ENCODE measurements at regions of chr12 and their contacts with region 1.

Region 1: DNA sequence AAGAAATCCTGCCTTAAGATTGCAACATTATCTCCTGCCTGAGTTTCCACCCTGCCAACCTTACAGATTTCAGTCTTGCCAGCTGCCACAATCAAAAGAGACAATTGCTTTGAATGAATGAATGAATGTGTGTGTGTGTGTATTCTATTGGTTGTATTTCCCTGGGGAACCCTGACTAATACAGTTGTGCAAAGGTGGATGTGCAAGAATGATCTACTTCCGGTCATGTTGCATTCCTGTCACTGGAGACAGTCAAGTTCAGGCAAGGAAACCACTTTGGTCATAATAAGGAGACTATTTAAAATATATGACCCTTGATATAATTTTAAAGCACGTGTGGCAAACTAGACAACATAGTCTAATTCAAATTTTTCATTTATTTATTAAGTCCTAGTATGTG is 13.1 kb downstream of the RERG start:
- DNase-seq: no peak
- ATAC-seq: no peak
- H3K4me3 ChIP-seq: no peak overlapping the region
- H3K27ac ChIP-seq: peak overlapping the region in 8 of 12 donors; percentile 44 to 80 (median 68)
- H3K4me1 ChIP-seq: peaks cover 0 to 41% (median 0%) of the 10 kb centered on the region in 12 donors
- H3K27me3 ChIP-seq: peaks cover 0 to 5% (median 0%) of the 10 kb centered on the region in 9 donors
- CTCF ChIP-seq: peak in 4 of 12 donors; percentile 12 to 26 (median 21)
- POLR2A ChIP-seq: no peak

Region 2: GRCh38 chr12:15165012-15165659 is 43.0 kb before region 1 on chr12:
- intact Hi-C with region 1: loop called in 1 of 10 experiments (anchors 5 kb)
- DNase-seq: peak in 2 of 5 donors; percentile 34 to 39
- ATAC-seq: peak; percentile 37 to 86 (median 68)
- H3K4me3 ChIP-seq: no peak overlapping the region
- H3K27ac ChIP-seq: peak overlapping the region; percentile 40 to 83 (median 66)
- H3K4me1 ChIP-seq: peaks cover 0 to 49% (median 4%) of the 10 kb centered on the region in 12 donors
- H3K27me3 ChIP-seq: no peaks in the 10 kb centered on the region
- CTCF ChIP-seq: no peak
- POLR2A ChIP-seq: no peak

Region 3: DNA sequence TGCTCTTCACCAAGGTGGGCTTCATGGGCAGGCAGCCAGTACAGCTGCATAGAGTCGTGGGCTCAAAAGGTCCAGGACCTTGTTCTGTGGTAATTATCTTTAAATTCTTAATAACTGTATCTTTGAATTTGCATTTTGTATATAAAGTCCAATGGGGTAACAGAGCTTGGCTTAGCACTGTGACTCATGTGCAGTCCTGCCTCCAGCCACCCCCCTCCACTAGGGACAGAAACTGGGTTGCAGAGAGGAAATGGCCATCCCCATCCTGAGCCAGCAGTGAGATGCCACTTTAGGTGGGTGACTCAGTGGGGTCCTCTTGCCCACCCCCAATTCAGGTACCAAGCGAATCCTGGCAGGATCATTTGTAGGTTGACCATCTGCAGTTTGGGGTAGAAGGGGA is 533.0 kb after region 1 on chr12:
- intact Hi-C with region 1: no loop called
- DNase-seq: no peak
- ATAC-seq: no peak
- H3K4me3 ChIP-seq: no peak overlapping the region
- H3K27ac ChIP-seq: no peak overlapping the region
- H3K4me1 ChIP-seq: peaks cover 0 to 16% (median 0%) of the 10 kb centered on the region in 12 donors
- H3K27me3 ChIP-seq: no peaks in the 10 kb centered on the region
- CTCF ChIP-seq: no peak
- POLR2A ChIP-seq: no peak

Measured in heart left ventricle (tissue), 16 donors.